Heart right ventricle (tissue), 16 donors: ENCODE measurements at regions of chr6 and their contacts with region 1.

Region 1: GRCh38 chr6:137013738-137014602 is 30.8 kb downstream of the IL20RA start:
- DNase-seq: no peak
- ATAC-seq: peak in 6 of 8 donors; percentile 47 to 77 (median 70)
- H3K4me3 ChIP-seq: no peak overlapping the region
- H3K27ac ChIP-seq: no peak overlapping the region
- H3K4me1 ChIP-seq: peaks cover 0 to 13% (median 3%) of the 10 kb centered on the region in 9 donors
- H3K27me3 ChIP-seq: peaks cover 0 to 41% (median 0%) of the 10 kb centered on the region in 7 donors
- CTCF ChIP-seq: peak; percentile 27 to 73 (median 60)

Region 2: GRCh38 chr6:136840276-136841001 is 173.5 kb before region 1 on chr6:
- intact Hi-C with region 1: loop called in 7 of 10 experiments (anchors 2 to 10 kb)
- DNase-seq: no peak
- ATAC-seq: no peak
- H3K4me3 ChIP-seq: no peak overlapping the region
- H3K27ac ChIP-seq: peak overlapping the region in 1 of 10 donors; percentile 17
- H3K4me1 ChIP-seq: peaks cover 0 to 12% (median 0%) of the 10 kb centered on the region in 9 donors
- H3K27me3 ChIP-seq: no peaks in the 10 kb centered on the region
- CTCF ChIP-seq: no peak

Region 3: GRCh38 chr6:136846046-136846445 is 167.9 kb before region 1 on chr6:
- intact Hi-C with region 1: loop called in 7 of 10 experiments (anchors 2 to 10 kb)
- DNase-seq: peak in 1 of 2 donors; percentile 18
- ATAC-seq: peak in 2 of 8 donors; percentile 54 to 56
- H3K4me3 ChIP-seq: no peak overlapping the region
- H3K27ac ChIP-seq: no peak overlapping the region
- H3K4me1 ChIP-seq: peaks cover 0 to 12% (median 0%) of the 10 kb centered on the region in 9 donors
- H3K27me3 ChIP-seq: no peaks in the 10 kb centered on the region
- CTCF ChIP-seq: peak; percentile 45 to 84 (median 73)

Region 4: DNA sequence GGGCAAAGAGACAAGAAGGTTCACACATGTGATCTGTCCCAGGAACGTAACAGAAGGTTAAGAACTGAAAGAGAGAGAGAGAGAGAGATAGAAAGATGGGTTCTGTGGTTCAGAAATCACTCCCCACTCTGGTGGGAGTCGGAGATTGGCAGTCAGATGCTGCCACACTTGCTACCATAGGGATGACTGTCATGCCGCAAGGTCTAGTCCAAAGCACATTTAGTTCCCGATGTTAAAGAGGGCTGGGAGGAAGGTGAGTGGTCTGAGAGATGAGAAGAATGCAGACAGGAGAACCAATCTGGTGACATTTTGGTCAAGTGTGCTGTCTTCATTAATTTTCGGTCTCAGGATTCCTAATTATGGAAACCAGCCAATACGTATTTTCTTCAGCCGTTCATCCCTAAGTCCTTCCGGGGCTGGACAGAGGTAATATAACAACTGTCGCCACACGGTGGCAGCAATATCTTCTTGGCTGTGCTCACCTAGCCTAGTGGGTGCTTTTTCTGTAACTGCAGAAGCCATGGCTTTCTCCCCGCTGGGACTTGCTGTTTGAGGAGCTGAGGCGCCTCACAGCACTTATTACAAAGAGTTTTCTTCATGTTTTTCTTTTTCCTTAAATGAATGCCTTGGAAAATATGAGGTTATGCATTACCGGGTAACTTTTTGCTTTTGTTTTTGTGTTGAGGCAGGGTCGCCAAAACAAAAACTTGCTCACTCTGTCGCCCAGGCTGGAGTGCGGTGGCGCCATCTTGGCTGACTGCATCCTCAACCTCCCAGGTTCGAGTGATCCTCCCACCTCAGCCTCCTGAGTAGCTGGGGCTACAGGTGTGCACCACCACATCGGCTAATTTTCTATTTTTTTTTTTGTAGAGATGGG is 45.9 kb before region 1 on chr6:
- intact Hi-C with region 1: loop called in 6 of 10 experiments (anchors 2 to 5 kb)
- DNase-seq: peak; percentile 50 to 61
- ATAC-seq: peak; percentile 69 to 88 (median 78)
- H3K4me3 ChIP-seq: no peak overlapping the region
- H3K27ac ChIP-seq: peak overlapping the region in 5 of 10 donors; percentile 2 to 78 (median 48)
- H3K4me1 ChIP-seq: peaks cover 0 to 20% (median 13%) of the 10 kb centered on the region in 9 donors
- H3K27me3 ChIP-seq: peaks cover 0 to 8% (median 0%) of the 10 kb centered on the region in 7 donors
- CTCF ChIP-seq: peak; percentile 43 to 74 (median 64)

Region 5: GRCh38 chr6:136989571-136990241 is 24.3 kb before region 1 on chr6:
- intact Hi-C with region 1: no loop called
- DNase-seq: peak; percentile 36 to 38
- ATAC-seq: peak; percentile 84 to 96 (median 94)
- H3K4me3 ChIP-seq: peak overlapping the region; percentile 12 to 68 (median 55)
- H3K27ac ChIP-seq: peak overlapping the region in 7 of 10 donors; percentile 25 to 73 (median 41)
- H3K4me1 ChIP-seq: peaks cover 0 to 18% (median 5%) of the 10 kb centered on the region in 9 donors
- H3K27me3 ChIP-seq: peaks cover 0 to 62% (median 11%) of the 10 kb centered on the region in 7 donors
- CTCF ChIP-seq: peak in 1 of 9 donors; percentile 20

Region 6: GRCh38 chr6:137248702-137249101 is 234.7 kb after region 1 on chr6:
- intact Hi-C with region 1: no loop called
- DNase-seq: no peak
- ATAC-seq: peak in 4 of 8 donors; percentile 52 to 80 (median 64)
- H3K4me3 ChIP-seq: no peak overlapping the region
- H3K27ac ChIP-seq: peak overlapping the region in 2 of 10 donors; percentile 15 to 59
- H3K4me1 ChIP-seq: peaks cover 0 to 30% (median 0%) of the 10 kb centered on the region in 9 donors
- H3K27me3 ChIP-seq: no peaks in the 10 kb centered on the region
- CTCF ChIP-seq: no peak